WTC11 (cell line): ENCODE measurements at regions of chr12 and their contacts with region 1.

Region 1: GRCh38 chr12:132414634-132415326 is 75.2 kb upstream of the FBRSL1 start:
- DNase-seq: peak; percentile 87
- ATAC-seq: peak; percentile 93
- H3K4me3 Mint-ChIP-seq: no peak overlapping the region
- H3K27ac Mint-ChIP-seq: no peak overlapping the region
- H3K4me1 Mint-ChIP-seq: no peaks in the 10 kb centered on the region
- H3K27me3 Mint-ChIP-seq: peaks cover 40% of the 10 kb centered on the region
- CTCF ChIP-seq: peak; percentile 78

Region 2: DNA sequence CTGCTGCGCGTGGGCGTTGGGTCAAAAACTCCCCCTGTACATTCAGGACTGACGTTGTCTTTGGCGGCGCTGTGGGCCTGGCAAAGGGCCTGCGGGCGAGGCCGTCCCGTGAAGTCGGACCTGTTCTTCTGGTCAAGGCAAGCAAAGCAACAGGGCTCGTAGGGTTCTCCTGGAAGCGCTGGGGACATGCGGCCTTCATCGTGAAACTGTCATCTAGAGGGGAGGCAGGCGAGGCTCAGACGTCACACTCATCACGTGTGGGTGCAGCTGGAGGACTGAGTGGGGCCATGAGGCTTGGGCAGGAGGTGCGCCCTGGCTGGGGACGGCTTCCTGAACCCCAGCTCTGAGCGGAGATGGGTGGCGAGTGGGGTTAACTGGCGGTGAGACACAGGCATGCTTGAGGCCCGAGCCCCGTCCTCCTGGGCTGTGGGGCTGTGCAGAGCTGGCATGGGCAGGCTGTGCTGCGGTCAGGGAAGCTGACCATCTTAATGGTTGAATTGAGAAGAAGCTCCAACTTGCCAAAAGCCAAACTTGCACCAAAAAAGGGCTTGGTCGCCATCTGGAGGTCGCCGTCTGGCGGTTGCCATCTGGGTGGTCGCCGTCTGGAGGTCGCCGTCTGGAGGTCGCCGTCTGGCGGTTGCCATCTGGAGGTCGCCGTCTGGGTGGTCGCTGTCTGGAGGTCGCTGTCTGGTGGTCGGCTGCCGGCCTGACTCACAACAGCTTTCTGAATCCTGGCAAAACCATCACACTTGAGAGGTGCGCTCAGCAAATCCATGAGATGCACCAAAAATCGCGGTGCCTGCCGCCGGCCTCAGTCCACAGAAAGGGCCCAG is 204.3 kb before region 1 on chr12:
- CTCF ChIA-PET with region 1: interaction called, 14 read pairs
- POLR2A ChIA-PET with region 1: no interaction called
- DNase-seq: peak; percentile 70
- ATAC-seq: peak; percentile 62
- H3K4me3 Mint-ChIP-seq: no peak overlapping the region
- H3K27ac Mint-ChIP-seq: no peak overlapping the region; the same call in 1 of the 2 replicates
- H3K4me1 Mint-ChIP-seq: no peaks in the 10 kb centered on the region
- H3K27me3 Mint-ChIP-seq: peaks cover 65% of the 10 kb centered on the region
- CTCF ChIP-seq: no peak

Region 3: GRCh38 chr12:132285991-132286681 is 128.6 kb before region 1 on chr12:
- CTCF ChIA-PET with region 1: interaction called, 29 read pairs
- POLR2A ChIA-PET with region 1: no interaction called
- DNase-seq: no peak
- ATAC-seq: peak; percentile 64
- H3K4me3 Mint-ChIP-seq: peak overlapping the region; percentile 62
- H3K27ac Mint-ChIP-seq: no peak overlapping the region
- H3K4me1 Mint-ChIP-seq: peaks cover 21% of the 10 kb centered on the region
- H3K27me3 Mint-ChIP-seq: peaks cover 45% of the 10 kb centered on the region
- CTCF ChIP-seq: no peak

Region 4: DNA sequence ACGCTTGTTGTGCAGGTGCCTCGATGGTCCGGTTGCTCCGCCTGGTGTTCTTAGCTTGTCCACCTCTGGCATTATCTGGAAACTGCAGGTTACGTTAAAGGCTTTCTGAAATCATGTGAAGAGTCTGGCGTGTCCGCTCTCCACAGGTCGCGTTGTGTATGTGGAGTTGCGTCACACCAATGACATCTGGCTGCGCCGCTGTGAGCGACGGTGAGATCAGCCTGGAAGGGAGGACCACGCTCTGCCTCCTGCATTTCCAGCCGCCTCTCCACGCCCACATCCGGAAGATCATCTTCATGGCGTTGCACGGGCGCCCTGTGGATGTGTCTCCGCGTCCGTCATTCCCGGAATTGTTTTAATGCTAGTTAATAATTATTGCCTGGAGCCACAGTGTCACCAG is 34.8 kb before region 1 on chr12:
- CTCF ChIA-PET with region 1: interaction called, 42 read pairs
- POLR2A ChIA-PET with region 1: no interaction called
- DNase-seq: no peak
- ATAC-seq: no peak
- H3K4me3 Mint-ChIP-seq: peak overlapping the region; percentile 34
- H3K27ac Mint-ChIP-seq: no peak overlapping the region
- H3K4me1 Mint-ChIP-seq: peaks cover 8% of the 10 kb centered on the region
- H3K27me3 Mint-ChIP-seq: peaks cover 27% of the 10 kb centered on the region
- CTCF ChIP-seq: no peak

Region 5: DNA sequence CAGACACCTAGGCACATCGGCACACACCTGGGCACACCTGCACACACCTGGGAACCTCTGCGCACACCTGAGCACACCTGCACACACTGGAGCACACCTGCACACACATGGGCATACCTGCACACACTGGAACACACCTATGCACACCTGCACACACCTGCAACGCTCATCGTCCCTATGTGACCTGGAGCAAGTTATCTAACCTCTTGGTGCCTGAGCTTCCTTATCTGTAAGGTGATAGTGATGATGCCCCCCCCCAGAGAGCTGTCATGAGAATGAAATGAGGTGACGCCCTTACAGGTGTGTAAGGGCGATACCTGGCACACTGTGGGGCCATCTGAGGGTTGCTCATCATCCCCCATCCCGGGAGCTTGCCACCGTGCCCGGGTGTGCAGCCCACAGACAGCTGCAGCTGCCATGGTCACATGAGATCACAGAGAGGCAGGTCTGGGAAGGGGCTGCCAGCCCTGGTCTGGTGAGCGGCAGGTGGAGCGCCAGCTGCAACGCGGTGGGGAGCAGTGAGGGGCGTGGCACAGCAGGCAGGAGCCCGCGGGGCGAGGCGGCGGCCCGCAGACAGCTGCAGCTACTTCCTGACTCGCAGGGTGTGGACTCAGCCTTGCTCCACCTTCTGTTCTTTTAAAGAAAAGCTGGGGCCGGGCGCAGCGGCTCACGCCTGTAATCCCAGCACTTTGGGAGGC is 15.3 kb after region 1 on chr12:
- CTCF ChIA-PET with region 1: interaction called, 66 read pairs
- POLR2A ChIA-PET with region 1: no interaction called
- DNase-seq: peak; percentile 66
- ATAC-seq: peak; percentile 53
- H3K4me3 Mint-ChIP-seq: peak overlapping the region; percentile 45
- H3K27ac Mint-ChIP-seq: no peak overlapping the region
- H3K4me1 Mint-ChIP-seq: peaks cover 28% of the 10 kb centered on the region
- H3K27me3 Mint-ChIP-seq: peaks cover 80% of the 10 kb centered on the region
- CTCF ChIP-seq: no peak

Region 6: DNA sequence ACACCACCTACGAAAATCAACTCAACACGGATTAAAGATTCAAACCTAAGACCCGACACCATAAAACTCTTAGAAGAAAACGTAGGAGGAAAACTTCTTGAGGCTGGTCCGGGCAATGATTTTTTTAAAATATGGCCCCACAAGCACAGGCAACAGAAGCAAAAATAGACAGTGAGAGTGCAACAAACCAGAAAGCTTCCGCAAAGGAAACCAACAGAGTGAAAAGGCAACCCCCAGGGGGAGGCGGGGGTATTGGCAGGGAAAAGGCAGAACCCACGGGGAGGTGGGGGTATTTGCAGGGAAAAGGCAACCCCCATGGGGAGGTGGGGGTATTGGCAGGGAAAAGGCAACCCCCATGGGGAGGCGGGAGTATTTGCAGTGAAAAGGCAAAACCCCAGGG is 54.6 kb after region 1 on chr12:
- CTCF ChIA-PET with region 1: no interaction called
- POLR2A ChIA-PET with region 1: no interaction called
- DNase-seq: no peak
- ATAC-seq: no peak
- H3K4me3 Mint-ChIP-seq: no peak overlapping the region
- H3K27ac Mint-ChIP-seq: no peak overlapping the region
- H3K4me1 Mint-ChIP-seq: peaks cover 4% of the 10 kb centered on the region
- H3K27me3 Mint-ChIP-seq: peaks cover 64% of the 10 kb centered on the region
- CTCF ChIP-seq: no peak

Region 7: GRCh38 chr12:132523576-132524331 is 109.0 kb after region 1 on chr12:
- CTCF ChIA-PET with region 1: interaction called, 17 read pairs
- POLR2A ChIA-PET with region 1: no interaction called
- DNase-seq: peak; percentile 86
- ATAC-seq: peak; percentile 80
- H3K4me3 Mint-ChIP-seq: no peak overlapping the region
- H3K27ac Mint-ChIP-seq: no peak overlapping the region
- H3K4me1 Mint-ChIP-seq: peaks cover 5% of the 10 kb centered on the region
- H3K27me3 Mint-ChIP-seq: peaks cover 29% of the 10 kb centered on the region
- CTCF ChIP-seq: peak; percentile 80

Region 8: DNA sequence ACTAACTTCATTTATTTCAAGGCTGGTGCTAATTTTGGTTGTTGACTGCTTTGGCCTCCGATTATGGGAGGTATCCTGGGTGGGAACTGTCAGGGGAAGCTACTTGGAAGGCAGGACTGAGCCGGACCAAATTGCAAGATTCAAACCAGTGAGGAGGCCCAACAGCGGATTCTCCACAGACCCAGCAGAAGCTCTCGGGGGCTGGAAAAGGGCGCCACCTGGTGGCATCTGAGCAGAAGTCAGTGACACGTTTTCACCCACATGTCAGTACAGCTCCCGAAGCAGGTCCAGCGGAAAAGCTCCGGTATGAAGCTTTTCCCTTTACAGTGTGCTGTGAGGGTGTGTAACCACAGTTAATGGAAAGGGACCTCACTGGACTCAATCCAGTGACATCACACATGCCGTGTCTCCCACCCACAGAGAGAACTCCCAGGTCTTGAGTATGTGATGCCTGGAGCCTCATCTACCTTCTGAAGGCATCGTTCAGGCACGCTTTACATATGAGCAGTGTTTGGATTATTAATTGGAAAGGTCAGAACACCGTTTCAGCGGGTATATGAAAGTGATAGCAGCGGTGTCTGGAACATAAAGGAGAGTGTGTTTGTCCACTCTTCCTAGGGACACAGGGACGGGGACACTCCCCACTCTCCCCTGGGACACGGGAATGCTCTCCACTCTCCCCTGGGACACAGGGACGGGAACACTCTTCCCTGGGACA is 200.2 kb after region 1 on chr12:
- CTCF ChIA-PET with region 1: interaction called, 48 read pairs
- POLR2A ChIA-PET with region 1: no interaction called
- DNase-seq: peak; percentile 88
- ATAC-seq: peak; percentile 63
- H3K4me3 Mint-ChIP-seq: no peak overlapping the region
- H3K27ac Mint-ChIP-seq: no peak overlapping the region
- H3K4me1 Mint-ChIP-seq: peaks cover 5% of the 10 kb centered on the region
- H3K27me3 Mint-ChIP-seq: peaks cover 83% of the 10 kb centered on the region
- CTCF ChIP-seq: peak; percentile 91

Region 9: DNA sequence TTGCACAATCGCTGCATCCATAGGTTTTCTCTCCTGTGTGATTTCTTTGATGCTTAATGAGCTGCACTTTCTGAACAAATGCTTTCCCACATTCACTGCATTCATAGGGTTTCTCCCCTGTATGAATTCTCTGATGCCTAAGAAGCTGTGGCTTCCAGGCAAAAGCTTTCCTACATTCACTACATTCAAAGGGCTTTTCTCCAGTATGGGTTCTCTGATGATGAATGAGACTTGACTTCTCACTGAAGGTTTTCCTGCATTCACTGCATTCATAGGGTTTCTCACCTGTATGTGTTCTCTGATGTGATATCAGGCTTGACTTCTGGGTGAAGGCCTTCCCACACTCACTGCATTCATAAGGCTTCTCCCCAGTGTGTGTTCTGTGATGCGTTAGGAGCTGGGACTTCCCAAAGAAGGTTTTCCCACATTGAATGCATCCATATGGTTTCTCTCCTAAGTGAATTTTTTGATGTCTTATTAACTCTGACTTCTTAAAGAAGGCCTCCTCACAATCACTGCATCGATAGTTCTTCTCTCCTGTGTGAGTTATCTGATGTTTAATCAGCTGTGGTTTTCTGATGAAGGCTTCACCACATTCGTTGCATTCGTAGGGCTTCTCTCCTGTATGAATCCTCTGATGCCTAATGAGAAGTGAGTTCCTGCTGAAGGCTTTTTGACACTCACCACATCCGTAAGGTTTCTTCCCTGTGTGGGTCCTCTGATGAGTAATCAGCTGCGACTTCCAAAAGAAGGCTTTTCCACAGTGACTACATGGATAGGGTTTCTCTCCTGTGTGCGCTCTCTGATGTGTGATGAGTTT is 511.0 kb after region 1 on chr12:
- CTCF ChIA-PET with region 1: no interaction called
- POLR2A ChIA-PET with region 1: no interaction called
- DNase-seq: no peak
- ATAC-seq: no peak
- H3K4me3 Mint-ChIP-seq: no peak overlapping the region
- H3K27ac Mint-ChIP-seq: no peak overlapping the region
- H3K4me1 Mint-ChIP-seq: no peaks in the 10 kb centered on the region
- H3K27me3 Mint-ChIP-seq: peaks cover 23% of the 10 kb centered on the region
- CTCF ChIP-seq: no peak